GM10248 (cell line): ENCODE measurements at regions of chr19 and their contacts with region 1.

Region 1: GRCh38 chr19:45558399-45558878 is 26.2 kb downstream of the OPA3 start:
- DNase-seq: peak; percentile 87
- CTCF ChIP-seq: peak; percentile 65

Region 2: GRCh38 chr19:45419396-45419795 is 139.0 kb before region 1 on chr19:
- CTCF ChIA-PET with region 1: no interaction called
- POLR2A ChIA-PET with region 1: no interaction called
- DNase-seq: peak; percentile 86
- CTCF ChIP-seq: no peak

Region 3: GRCh38 chr19:45496349-45496953 is 62.0 kb before region 1 on chr19:
- CTCF ChIA-PET with region 1: interaction called, 14 read pairs
- POLR2A ChIA-PET with region 1: no interaction called
- DNase-seq: peak; percentile 48
- CTCF ChIP-seq: no peak

Region 4: DNA sequence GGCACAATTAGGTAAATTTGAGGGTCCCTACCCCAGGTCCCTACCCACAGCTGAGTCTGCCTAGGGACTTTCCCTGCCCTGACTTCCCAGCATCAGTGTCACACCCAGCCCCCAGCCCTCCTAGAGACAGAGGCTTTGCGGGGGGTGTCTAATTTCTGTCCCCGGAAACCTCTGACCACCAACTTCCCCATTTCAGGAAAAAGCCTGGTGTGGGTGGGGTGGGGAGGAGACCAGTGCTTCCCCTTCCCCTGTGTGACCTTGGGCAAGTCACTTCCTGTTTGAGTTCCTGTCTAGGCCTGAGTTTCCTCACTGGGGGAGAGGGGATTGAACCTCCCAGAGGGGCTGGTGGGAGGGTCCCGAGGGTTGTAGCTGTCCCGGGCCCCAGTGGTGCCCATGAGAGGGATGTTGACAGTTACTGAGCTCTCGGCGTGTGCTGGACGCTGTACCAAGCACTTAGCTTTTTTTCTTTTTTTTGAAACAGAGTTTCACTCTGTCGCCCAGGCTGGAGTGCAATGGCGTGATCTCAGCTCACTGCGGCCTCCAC is 43.3 kb before region 1 on chr19:
- CTCF ChIA-PET with region 1: interaction called, 10 read pairs
- POLR2A ChIA-PET with region 1: no interaction called
- DNase-seq: peak; percentile 55
- CTCF ChIP-seq: no peak

Region 5: DNA sequence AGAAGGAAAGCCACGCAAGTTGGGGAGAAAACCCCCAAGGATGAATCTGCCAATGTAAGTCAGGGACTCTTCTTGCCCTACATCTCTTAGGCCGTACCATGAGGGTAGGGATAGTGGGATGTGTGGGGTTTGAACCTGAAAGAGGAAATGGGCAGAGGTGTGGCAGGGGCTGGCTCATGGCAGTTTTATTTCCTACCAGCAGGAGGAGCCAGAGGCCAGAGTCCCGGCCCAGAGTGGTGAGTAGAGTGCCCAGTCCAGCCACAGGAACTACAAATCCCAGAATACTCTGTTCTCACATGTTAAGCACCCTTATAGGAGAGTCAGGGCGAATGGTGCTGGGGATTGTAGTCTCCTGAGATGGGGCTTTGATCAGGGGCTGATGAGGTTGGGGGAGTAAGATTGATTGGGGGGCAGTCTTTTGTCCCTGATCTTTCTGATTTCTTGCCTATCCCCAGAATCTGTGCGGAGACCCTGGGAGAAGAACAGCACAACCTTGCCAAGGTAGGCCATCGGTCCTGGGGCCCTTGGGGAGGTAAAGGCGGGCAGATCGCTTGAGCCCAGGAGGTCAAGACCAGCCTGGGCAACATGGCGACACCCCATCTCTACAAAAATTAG is 34.7 kb before region 1 on chr19:
- CTCF ChIA-PET with region 1: interaction called, 22 read pairs
- POLR2A ChIA-PET with region 1: no interaction called
- DNase-seq: peak; percentile 88
- CTCF ChIP-seq: peak; percentile 84

Region 6: GRCh38 chr19:45542234-45542668 is 16.2 kb before region 1 on chr19:
- CTCF ChIA-PET with region 1: interaction called, 34 read pairs
- POLR2A ChIA-PET with region 1: no interaction called
- DNase-seq: no peak
- CTCF ChIP-seq: no peak

Region 7: GRCh38 chr19:45547976-45548609 is 10.3 kb before region 1 on chr19:
- CTCF ChIA-PET with region 1: interaction called, 34 read pairs
- POLR2A ChIA-PET with region 1: no interaction called
- DNase-seq: no peak
- CTCF ChIP-seq: no peak

Region 8: DNA sequence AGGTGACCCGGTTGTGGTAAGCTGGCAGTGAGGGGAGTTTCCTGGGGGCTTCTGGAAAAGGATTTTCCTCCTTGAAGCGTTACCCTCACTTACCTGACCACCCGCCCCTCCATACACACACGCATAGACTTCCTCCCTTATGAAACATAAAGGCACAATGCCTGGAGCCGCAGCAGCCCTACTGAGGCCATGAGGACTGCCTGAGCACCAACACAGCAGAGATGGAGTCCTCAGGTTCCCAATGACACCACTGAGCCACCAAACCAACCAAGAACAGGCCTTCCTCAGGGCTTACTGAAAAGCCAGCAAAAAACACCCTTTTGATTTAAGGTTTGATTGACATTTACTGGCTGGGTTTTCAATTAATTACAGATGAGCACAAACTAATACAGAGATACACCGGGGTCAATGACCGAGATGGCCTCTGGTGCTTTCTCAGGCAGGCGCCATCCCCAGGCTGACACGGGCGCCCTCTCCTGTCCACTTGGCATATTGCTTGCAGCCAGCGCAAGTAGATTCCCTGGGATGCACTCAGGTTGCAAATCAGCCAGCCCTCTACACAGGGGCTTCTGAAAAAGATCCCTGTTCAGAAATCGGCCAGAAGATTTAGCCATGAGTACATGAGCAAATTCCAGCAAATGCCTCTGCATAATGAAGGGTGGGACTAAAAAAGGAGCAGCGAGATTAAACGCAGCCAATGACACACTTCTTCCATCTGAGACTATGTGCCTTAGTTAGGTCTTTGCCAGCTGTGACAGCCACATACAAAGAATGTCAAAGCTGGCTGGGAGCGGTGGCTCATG is 11.4 kb after region 1 on chr19:
- CTCF ChIA-PET with region 1: interaction called, 20 read pairs
- POLR2A ChIA-PET with region 1: no interaction called
- DNase-seq: peak; percentile 66
- CTCF ChIP-seq: peak; percentile 85

Region 9: GRCh38 chr19:45681391-45682015 is 123.1 kb after region 1 on chr19:
- CTCF ChIA-PET with region 1: no interaction called
- POLR2A ChIA-PET with region 1: no interaction called
- DNase-seq: peak; percentile 85
- CTCF ChIP-seq: peak; percentile 89